PC-9 (cell line): ENCODE measurements at regions of chr14 and their contacts with region 1.

Region 1: GRCh38 chr14:68788996-68789820 is 3.7 kb downstream of the ZFP36L1 start:
- DNase-seq: peak; percentile 77 to 88
- H3K4me3 ChIP-seq: peak overlapping the region; percentile 95
- H3K27ac ChIP-seq: peak overlapping the region; percentile 98
- H3K4me1 ChIP-seq: peaks cover 45% of the 10 kb centered on the region
- H3K27me3 ChIP-seq: no peaks in the 10 kb centered on the region
- CTCF ChIP-seq: peak; percentile 80

Region 2: GRCh38 chr14:67934008-67934481 is 855.2 kb before region 1 on chr14:
- CTCF ChIA-PET with region 1: no interaction called
- POLR2A ChIA-PET with region 1: no interaction called
- intact Hi-C with region 1: loop called (anchors 1 kb)
- DNase-seq: peak in 1 of 2 experiments; percentile 64
- H3K4me3 ChIP-seq: no peak overlapping the region
- H3K27ac ChIP-seq: no peak overlapping the region
- H3K4me1 ChIP-seq: 0 out of 2 replicates have a peak, but pooled peaks cover 7% of the 10 kb centered on the region
- H3K27me3 ChIP-seq: no peaks in the 10 kb centered on the region
- CTCF ChIP-seq: peak; percentile 79

Region 3: DNA sequence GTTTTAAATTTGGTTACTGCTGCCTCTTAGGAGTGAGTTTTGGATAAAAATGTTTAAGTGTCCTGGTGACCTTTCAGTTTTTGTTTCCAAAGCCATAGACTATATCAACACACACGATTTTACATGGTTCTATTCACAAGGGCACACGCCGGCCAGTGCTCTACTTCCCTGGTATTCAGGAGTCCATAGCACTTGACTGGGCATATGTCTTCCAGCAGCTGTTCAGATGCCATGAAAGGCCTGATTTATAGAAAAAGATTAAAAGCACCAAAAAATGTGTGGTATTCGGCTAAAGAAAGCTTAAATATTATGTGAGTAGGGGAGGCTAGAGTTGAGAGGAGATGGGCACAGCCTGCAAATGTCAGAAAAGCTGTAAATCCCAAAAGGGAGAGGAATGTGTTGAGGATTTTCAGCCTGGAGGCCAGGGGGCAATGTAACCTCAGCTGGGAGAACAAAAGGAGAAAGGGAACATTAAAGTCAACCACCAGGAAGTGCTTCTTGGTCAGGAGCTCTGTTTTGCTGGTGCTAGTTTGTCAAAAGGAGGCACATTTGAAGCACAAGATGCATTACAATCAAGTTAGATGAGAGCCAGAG is 491.2 kb before region 1 on chr14:
- CTCF ChIA-PET with region 1: no interaction called
- POLR2A ChIA-PET with region 1: interaction called, 5 read pairs
- intact Hi-C with region 1: loop called (anchors 2 kb)
- DNase-seq: no peak
- H3K4me3 ChIP-seq: no peak overlapping the region
- H3K27ac ChIP-seq: no peak overlapping the region
- H3K4me1 ChIP-seq: 0 out of 2 replicates have a peak, but pooled peaks cover 8% of the 10 kb centered on the region
- H3K27me3 ChIP-seq: no peaks in the 10 kb centered on the region
- CTCF ChIP-seq: 0 out of 2 replicates have a peak, but pooled peaks have one; percentile 20

Region 4: DNA sequence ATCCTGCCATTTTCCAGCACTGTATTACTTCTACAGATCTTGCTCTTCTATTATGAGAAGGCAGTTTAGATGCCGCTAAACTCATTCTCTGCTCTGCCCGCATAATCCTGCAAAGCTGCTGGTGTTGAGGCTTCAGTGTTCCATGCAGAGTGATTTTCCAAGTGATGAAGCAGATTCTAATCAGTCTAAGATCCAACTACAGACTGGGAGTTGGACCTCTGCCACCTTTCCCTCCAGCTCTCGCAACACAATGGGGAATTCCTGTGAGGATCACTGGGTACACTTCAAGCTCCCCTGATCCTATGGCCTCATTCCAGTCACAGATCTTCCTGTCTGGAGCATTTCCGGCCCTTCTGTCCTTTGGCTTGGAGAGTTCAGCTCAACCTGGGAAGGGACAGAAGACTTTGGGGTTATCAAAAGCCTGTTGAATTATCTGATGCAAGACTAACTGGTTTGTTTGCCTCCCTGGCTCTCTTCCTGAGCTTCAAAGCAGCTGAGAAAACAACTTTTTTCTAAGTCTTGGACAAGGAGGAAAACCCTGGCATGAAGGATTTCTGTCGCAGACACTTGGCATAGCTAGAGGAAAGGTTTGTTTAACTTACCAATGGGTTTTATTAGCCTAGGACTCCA is 330.3 kb before region 1 on chr14:
- CTCF ChIA-PET with region 1: no interaction called
- POLR2A ChIA-PET with region 1: no interaction called
- intact Hi-C with region 1: loop called (anchors 1 kb)
- DNase-seq: peak; percentile 85 to 97
- H3K4me3 ChIP-seq: peak overlapping the region; percentile 25; the same call in 1 of the 2 replicates
- H3K27ac ChIP-seq: peak overlapping the region; percentile 93
- H3K4me1 ChIP-seq: peaks cover 77% of the 10 kb centered on the region
- H3K27me3 ChIP-seq: no peaks in the 10 kb centered on the region
- CTCF ChIP-seq: no peak

Region 5: GRCh38 chr14:68479247-68479646 is 310.0 kb before region 1 on chr14:
- CTCF ChIA-PET with region 1: interaction called, 10 read pairs
- POLR2A ChIA-PET with region 1: interaction called, 5 read pairs
- intact Hi-C with region 1: no loop called
- DNase-seq: peak; percentile 57 to 94
- H3K4me3 ChIP-seq: no peak overlapping the region
- H3K27ac ChIP-seq: peak overlapping the region; percentile 95
- H3K4me1 ChIP-seq: peaks cover 86% of the 10 kb centered on the region
- H3K27me3 ChIP-seq: no peaks in the 10 kb centered on the region
- CTCF ChIP-seq: no peak

Region 6: GRCh38 chr14:68627880-68628607 is 161.2 kb before region 1 on chr14:
- CTCF ChIA-PET with region 1: no interaction called
- POLR2A ChIA-PET with region 1: interaction called, 29 read pairs
- intact Hi-C with region 1: loop called (anchors 1 kb)
- DNase-seq: peak; percentile 72 to 81
- H3K4me3 ChIP-seq: peak overlapping the region; percentile 60
- H3K27ac ChIP-seq: peak overlapping the region; percentile 92
- H3K4me1 ChIP-seq: peaks cover 45% of the 10 kb centered on the region
- H3K27me3 ChIP-seq: no peaks in the 10 kb centered on the region
- CTCF ChIP-seq: no peak

Region 7: GRCh38 chr14:68695326-68695768 is 93.9 kb before region 1 on chr14:
- CTCF ChIA-PET with region 1: interaction called, 5 read pairs
- POLR2A ChIA-PET with region 1: interaction called, 8 read pairs
- intact Hi-C with region 1: loop called (anchors 1 kb)
- DNase-seq: peak; percentile 86 to 100
- H3K4me3 ChIP-seq: no peak overlapping the region
- H3K27ac ChIP-seq: peak overlapping the region; percentile 93
- H3K4me1 ChIP-seq: peaks cover 47% of the 10 kb centered on the region
- H3K27me3 ChIP-seq: no peaks in the 10 kb centered on the region
- CTCF ChIP-seq: no peak

Region 8: GRCh38 chr14:69002069-69002468 is 212.9 kb after region 1 on chr14:
- CTCF ChIA-PET with region 1: no interaction called
- POLR2A ChIA-PET with region 1: no interaction called
- intact Hi-C with region 1: no loop called
- DNase-seq: peak; percentile 51 to 66
- H3K4me3 ChIP-seq: no peak overlapping the region
- H3K27ac ChIP-seq: no peak overlapping the region
- H3K4me1 ChIP-seq: peaks cover 20% of the 10 kb centered on the region
- H3K27me3 ChIP-seq: no peaks in the 10 kb centered on the region
- CTCF ChIP-seq: peak; percentile 33; the same call in 1 of the 2 replicates